Dorsolateral prefrontal cortex (tissue), 120 donors: ENCODE measurements at regions of chr1 and their contacts with region 1.

Region 1: DNA sequence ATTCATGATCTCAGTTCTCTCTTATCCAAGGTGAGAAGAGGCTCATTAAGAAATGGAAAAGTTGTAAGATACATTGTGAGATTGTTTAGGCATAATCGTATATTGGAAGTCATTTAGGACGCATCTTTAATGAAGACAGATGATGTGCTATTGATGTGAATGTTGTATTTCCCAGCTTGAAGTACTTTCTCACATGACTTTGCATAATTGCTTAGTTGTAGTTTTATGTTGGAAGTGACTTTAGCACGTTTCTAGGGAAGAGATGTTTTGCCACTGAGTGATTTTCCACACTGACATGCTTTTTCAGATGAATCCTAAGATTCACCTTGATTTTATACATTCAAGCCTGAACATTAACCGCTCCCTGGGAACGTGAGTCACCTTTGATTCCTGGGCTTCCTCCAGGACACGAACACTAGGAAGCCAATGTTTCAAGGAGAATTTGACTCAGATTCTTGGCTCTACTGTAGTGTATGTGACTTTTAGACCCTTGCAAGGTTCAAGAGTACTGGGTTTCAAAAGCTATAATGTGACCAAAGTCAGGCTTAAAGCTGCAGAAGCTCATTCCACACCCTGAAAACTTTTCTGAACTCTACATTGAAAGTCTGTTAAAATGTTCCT is 27.9 kb downstream of the ANGEL2 start:
- DNase-seq: no peak
- H3K4me3 ChIP-seq: no peak overlapping the region
- H3K27ac ChIP-seq: no peak overlapping the region
- H3K27me3 ChIP-seq: no peaks in the 10 kb centered on the region
- CTCF ChIP-seq: no peak

Region 2: GRCh38 chr1:212749821-212750535 is 237.8 kb before region 1 on chr1:
- intact Hi-C with region 1: no loop called
- DNase-seq: no peak
- H3K4me3 ChIP-seq: no peak overlapping the region
- H3K27ac ChIP-seq: peak overlapping the region in 9 of 59 donors; percentile 0 to 51 (median 24)
- H3K27me3 ChIP-seq: no peaks in the 10 kb centered on the region
- CTCF ChIP-seq: peak; percentile 39 to 82 (median 69)

Region 3: GRCh38 chr1:212814537-212815334 is 173.1 kb before region 1 on chr1:
- intact Hi-C with region 1: loop called in 1 of 2 experiments (anchors 2 kb)
- DNase-seq: no peak
- H3K4me3 ChIP-seq: no peak overlapping the region
- H3K27ac ChIP-seq: peak overlapping the region in 8 of 59 donors; percentile 2 to 46 (median 31)
- H3K27me3 ChIP-seq: no peaks in the 10 kb centered on the region
- CTCF ChIP-seq: peak; percentile 10 to 73 (median 58)

Region 4: DNA sequence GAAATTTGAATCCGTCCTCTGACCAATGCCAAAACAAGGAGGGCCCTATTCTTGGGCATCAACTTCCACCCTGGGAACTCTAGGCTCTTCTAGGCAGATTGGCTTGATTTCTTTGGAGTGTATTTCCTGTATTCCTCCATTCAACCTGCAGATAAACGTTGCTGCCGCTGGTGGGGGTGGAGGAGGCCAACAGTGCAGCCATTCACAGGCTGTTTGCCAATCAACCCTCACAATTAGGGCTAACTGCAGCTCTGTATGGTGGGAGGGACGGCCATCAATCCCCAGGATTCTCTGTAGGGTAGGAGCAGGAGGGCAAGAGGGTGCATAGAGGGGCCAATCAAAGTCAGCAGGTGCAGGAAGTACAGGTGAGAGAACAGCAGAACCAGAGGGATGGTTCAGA is 726.8 kb after region 1 on chr1:
- intact Hi-C with region 1: no loop called
- DNase-seq: no peak
- H3K4me3 ChIP-seq: no peak overlapping the region
- H3K27ac ChIP-seq: no peak overlapping the region
- H3K27me3 ChIP-seq: peaks cover 0 to 14% (median 0%) of the 10 kb centered on the region in 45 donors
- CTCF ChIP-seq: no peak